ENCODE measurements at regions of chr19 and their contacts with region 1.

Region 1: GRCh38 chr19:46030812-46031550 is 8.1 kb upstream of the PGLYRP1 start:
- DNase-seq: no peak
- ATAC-seq: no peak
- H3K4me3 ChIP-seq: no peak overlapping the region
- H3K27ac ChIP-seq: no peak overlapping the region
- H3K4me1 ChIP-seq: no peaks in the 10 kb centered on the region
- H3K27me3 ChIP-seq: no peaks in the 10 kb centered on the region
- CTCF ChIP-seq: no peak

Region 2: GRCh38 chr19:45834970-45835369 is 196.0 kb before region 1 on chr19:
- CTCF ChIA-PET with region 1: no interaction called
- POLR2A ChIA-PET with region 1: no interaction called
- intact Hi-C with region 1: no loop called
- DNase-seq: no peak
- ATAC-seq: no peak
- H3K4me3 ChIP-seq: no peak overlapping the region
- H3K27ac ChIP-seq: no peak overlapping the region
- H3K4me1 ChIP-seq: no peaks in the 10 kb centered on the region
- H3K27me3 ChIP-seq: no peaks in the 10 kb centered on the region
- CTCF ChIP-seq: no peak

Region 3: GRCh38 chr19:46265217-46265828 is 234.3 kb after region 1 on chr19:
- CTCF ChIA-PET with region 1: no interaction called
- POLR2A ChIA-PET with region 1: no interaction called
- intact Hi-C with region 1: loop called (anchors 1 kb)
- DNase-seq: peak; percentile 75
- ATAC-seq: peak; percentile 83
- H3K4me3 ChIP-seq: no peak overlapping the region
- H3K27ac ChIP-seq: no peak overlapping the region
- H3K4me1 ChIP-seq: peaks cover 8% of the 10 kb centered on the region
- H3K27me3 ChIP-seq: no peaks in the 10 kb centered on the region
- CTCF ChIP-seq: peak; percentile 77